Sigmoid colon (tissue), 7 donors: ENCODE measurements at regions of chr15 and their contacts with region 1.

Region 1: DNA sequence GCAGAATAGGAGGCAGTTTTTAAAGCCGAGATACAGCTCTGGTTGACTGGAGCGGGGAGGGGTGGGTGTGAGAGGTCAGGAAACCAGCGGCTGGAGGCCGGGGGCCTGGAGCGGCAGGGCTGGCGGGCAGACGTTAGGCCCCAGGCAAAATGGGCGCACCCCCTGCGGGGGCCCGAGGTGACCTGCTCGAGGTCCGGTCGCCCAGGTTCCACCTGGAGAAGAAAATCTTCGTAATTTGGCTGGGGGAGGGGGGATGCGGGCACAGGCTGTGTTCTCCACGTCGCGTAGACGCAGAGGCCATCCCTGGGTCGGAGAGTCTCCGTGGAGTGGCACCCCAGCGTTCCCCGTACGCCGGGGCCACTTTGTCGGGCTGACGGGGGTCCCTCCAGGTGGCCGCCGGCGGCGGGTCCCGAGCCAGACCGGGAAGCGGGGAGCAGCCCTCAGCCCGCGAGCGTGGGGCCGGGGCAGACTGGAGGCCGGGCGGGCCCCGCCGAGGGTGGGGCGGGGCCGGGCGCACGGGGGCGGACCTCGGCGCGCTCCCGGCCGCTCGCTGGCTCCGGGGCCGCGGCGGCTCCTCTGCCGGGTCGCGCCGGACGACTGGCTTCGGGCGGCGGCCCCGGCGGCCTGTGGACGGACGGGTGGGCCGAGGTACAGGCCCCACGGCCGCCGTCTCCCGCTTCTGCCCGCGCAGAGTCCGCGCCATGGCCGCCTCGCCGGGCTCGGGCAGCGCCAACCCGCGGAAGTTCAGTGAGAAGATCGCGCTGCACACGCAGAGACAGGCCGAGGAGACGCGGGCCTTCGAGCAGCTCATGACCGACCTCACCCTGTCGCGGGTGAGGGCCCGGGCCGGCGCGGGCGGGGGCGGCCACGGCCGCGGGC is at the start of gene CRTC3:
- DNase-seq: peak; percentile 72
- H3K4me3 ChIP-seq: peak within 1 kb of the TSS; percentile 73 to 83 (median 78)
- H3K27ac ChIP-seq: peak within 1 kb of the TSS; percentile 94 to 99 (median 96)
- H3K4me1 ChIP-seq: peaks cover 0 to 40% (median 36%) of the 10 kb centered on the region in 4 donors
- H3K27me3 ChIP-seq: no peaks in the 10 kb centered on the region
- CTCF ChIP-seq: no peak
- EP300 ChIP-seq: no peak
- POLR2A ChIP-seq: no peak
- total RNA-seq, gene CRTC3: 27.6 to 64.0 (median 35.7) TPM

Region 2: GRCh38 chr15:90387537-90388461 is 141.8 kb before region 1 on chr15 and contains the start of gene IQGAP1:
- intact Hi-C with region 1: no loop called
- DNase-seq: peak; percentile 99
- H3K4me3 ChIP-seq: peak within 1 kb of the TSS; percentile 86 to 99 (median 90)
- H3K27ac ChIP-seq: peak within 1 kb of the TSS; percentile 96 to 100 (median 96)
- H3K4me1 ChIP-seq: peaks cover 0 to 44% (median 38%) of the 10 kb centered on the region in 4 donors
- H3K27me3 ChIP-seq: no peaks in the 10 kb centered on the region
- CTCF ChIP-seq: no peak
- EP300 ChIP-seq: no peak
- POLR2A ChIP-seq: peak; percentile 78 to 79
- total RNA-seq, gene IQGAP1: 135 to 283 (median 183) TPM

Region 3: GRCh38 chr15:90583471-90584252 is 54.1 kb after region 1 on chr15:
- intact Hi-C with region 1: no loop called
- DNase-seq: no peak
- H3K4me3 ChIP-seq: no peak overlapping the region
- H3K27ac ChIP-seq: peak overlapping the region in 2 of 4 donors; percentile 37 to 39
- H3K4me1 ChIP-seq: peaks cover 0 to 45% (median 26%) of the 10 kb centered on the region in 4 donors
- H3K27me3 ChIP-seq: no peaks in the 10 kb centered on the region
- CTCF ChIP-seq: no peak
- EP300 ChIP-seq: no peak
- POLR2A ChIP-seq: no peak

Region 4: GRCh38 chr15:90620379-90621067 is 90.9 kb after region 1 on chr15:
- intact Hi-C with region 1: loop called (anchors 2 kb)
- DNase-seq: no peak
- H3K4me3 ChIP-seq: no peak overlapping the region
- H3K27ac ChIP-seq: no peak overlapping the region
- H3K4me1 ChIP-seq: peaks cover 0 to 21% (median 17%) of the 10 kb centered on the region in 4 donors
- H3K27me3 ChIP-seq: no peaks in the 10 kb centered on the region
- CTCF ChIP-seq: no peak
- EP300 ChIP-seq: no peak
- POLR2A ChIP-seq: no peak

Region 5: GRCh38 chr15:90750186-90750585 is 220.6 kb after region 1 on chr15:
- intact Hi-C with region 1: no loop called
- DNase-seq: no peak
- H3K4me3 ChIP-seq: no peak overlapping the region
- H3K27ac ChIP-seq: no peak overlapping the region
- H3K4me1 ChIP-seq: no peaks in the 10 kb centered on the region
- H3K27me3 ChIP-seq: no peaks in the 10 kb centered on the region
- CTCF ChIP-seq: no peak
- EP300 ChIP-seq: no peak
- POLR2A ChIP-seq: no peak

Region 6: DNA sequence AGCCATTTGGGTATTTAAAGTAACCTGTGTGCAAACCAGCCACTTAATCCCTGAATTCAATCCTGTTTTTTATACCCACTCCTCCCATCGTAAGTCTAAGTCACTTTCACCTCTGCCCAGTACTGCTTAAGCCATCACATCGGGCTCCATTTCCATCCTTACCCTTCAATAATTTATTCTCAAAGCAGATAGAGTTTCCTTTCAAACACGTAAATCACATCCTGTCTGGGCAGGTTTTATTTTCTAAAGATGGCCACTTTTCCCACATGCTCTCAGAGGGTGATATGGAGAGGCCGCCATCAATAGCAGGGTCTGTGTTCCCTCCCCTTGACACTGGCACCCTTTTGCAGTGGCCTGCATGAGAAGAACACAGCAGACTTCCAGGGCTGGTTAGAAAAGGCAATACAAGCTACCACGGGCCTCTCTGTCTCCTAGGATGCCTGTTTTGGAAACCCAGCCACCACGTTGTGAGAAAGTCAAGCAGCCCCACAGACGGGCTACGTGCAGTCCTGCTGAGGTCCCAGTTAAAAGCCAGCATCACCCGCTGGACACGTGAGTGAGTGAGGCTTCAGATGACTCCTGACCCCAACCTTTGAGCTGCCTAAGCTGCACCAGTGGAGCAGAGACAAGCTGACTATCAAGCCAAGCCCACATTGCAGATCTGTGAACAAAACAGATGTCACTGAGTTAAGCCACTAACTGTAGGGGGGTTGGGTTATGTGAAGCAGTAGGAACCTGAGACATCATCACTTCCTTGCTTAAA is 1082.1 kb after region 1 on chr15:
- intact Hi-C with region 1: no loop called
- DNase-seq: no peak
- H3K4me3 ChIP-seq: no peak overlapping the region
- H3K27ac ChIP-seq: no peak overlapping the region
- H3K4me1 ChIP-seq: no peaks in the 10 kb centered on the region
- H3K27me3 ChIP-seq: no peaks in the 10 kb centered on the region
- CTCF ChIP-seq: no peak
- EP300 ChIP-seq: no peak
- POLR2A ChIP-seq: no peak